Activated T-helper 1 cell treated with anti-CD3 and anti-CD28 coated beads, Interleukin-12 subunit alpha, Interleukin-12 subunit beta, Interleukin-2, Interleukin-4 antibody, amounts not matched to agents 30 ng/mL and 10 ng/mL and 1 ng/mL, durations not matched to agents 14 hours and 24 hours and 36 hours (primary cell): ENCODE measurements at regions of chr2 and their contacts with region 1.

Region 1: GRCh38 chr2:42494355-42495233 is 812 bp upstream of the KCNG3 start:
- DNase-seq: peak; percentile 57
- H3K4me3 Mint-ChIP-seq: peak overlapping the region; percentile 89
- H3K27ac Mint-ChIP-seq: peak overlapping the region; percentile 82
- H3K4me1 Mint-ChIP-seq: peaks cover 9% of the 10 kb centered on the region
- H3K27me3 Mint-ChIP-seq: peaks cover 40% of the 10 kb centered on the region

Region 2: DNA sequence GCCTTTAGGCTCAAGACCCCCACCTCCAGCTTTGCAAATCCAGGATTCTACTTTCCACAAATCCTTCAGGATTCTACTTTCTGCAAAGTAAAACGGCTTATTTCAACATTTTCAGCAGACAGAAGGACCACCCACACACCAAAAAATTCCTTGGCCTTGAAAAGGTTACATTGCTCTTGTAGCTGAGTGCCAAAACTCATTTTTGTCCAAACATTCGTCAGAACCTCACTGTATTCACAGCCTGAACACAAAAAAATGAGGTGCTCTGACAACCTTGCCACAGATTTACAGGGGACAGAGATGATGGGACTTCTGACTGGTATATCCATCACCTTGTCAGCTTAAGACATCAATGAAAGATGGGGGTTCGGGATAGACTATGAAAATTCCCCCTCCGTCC is 70.6 kb before region 1 on chr2:
- intact Hi-C with region 1: loop called (anchors 5 kb)
- DNase-seq: no peak
- H3K4me3 Mint-ChIP-seq: no peak overlapping the region
- H3K27ac Mint-ChIP-seq: no peak overlapping the region
- H3K4me1 Mint-ChIP-seq: peaks cover 9% of the 10 kb centered on the region
- H3K27me3 Mint-ChIP-seq: no peaks in the 10 kb centered on the region

Region 3: GRCh38 chr2:42568401-42569115 is 74.0 kb after region 1 on chr2 and contains the start of gene MTA3:
- intact Hi-C with region 1: loop called (anchors 2 kb)
- DNase-seq: peak; percentile 54
- H3K4me3 Mint-ChIP-seq: peak within 1 kb of the TSS; percentile 92
- H3K27ac Mint-ChIP-seq: peak within 1 kb of the TSS; percentile 96
- H3K4me1 Mint-ChIP-seq: peaks cover 20% of the 10 kb centered on the region
- H3K27me3 Mint-ChIP-seq: peaks cover 3% of the 10 kb centered on the region
- total RNA-seq, gene MTA3: 29.4 and 31.1 TPM in 2 replicates

Region 4: GRCh38 chr2:42792583-42793333 is 298.2 kb after region 1 on chr2 and contains the start of gene HAAO:
- intact Hi-C with region 1: loop called (anchors 5 kb)
- DNase-seq: no peak
- H3K4me3 Mint-ChIP-seq: peak within 1 kb of the TSS; percentile 76
- H3K27ac Mint-ChIP-seq: peak within 1 kb of the TSS; percentile 59
- H3K4me1 Mint-ChIP-seq: peaks cover 26% of the 10 kb centered on the region
- H3K27me3 Mint-ChIP-seq: peaks cover 38% of the 10 kb centered on the region
- total RNA-seq, gene HAAO: 0.37 and 0.86 TPM in 2 replicates

Region 5: DNA sequence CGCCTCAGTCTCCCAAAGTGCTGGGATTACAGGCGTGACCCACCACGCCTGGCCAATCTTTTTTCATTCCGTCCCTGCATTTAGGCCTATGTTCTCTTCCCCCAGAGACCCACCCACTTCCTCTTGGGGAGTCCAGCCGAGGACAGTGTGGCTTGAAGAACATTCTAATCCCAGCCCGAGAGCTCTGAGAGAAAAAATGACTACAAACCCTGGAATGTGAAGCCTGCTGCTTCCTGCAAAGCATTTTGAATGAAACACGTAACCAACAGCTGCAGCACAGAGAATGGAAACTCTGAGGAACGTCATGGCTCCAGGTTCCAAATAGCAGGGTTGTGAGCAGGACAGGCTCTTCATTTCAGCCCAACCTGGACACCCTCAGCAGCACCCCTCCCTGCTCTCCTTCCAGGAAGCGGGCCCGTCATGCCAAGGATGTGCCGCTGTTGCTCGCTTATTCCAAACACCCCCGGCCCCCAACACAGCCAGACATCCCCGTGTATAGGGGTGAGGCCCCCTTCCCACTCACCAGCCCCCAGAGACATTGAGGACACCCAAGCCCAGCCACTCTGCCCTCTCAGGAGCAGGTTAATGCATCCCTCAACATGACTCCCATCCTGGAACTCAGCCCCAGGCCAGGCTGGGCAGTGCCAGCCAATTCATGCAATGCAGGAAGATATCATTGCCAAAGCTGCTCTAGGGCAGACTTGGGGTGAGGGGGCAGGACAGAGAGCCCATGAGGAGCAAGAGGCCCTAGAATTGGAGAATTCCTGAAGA is 592.0 kb after region 1 on chr2:
- intact Hi-C with region 1: no loop called
- DNase-seq: no peak
- H3K4me3 Mint-ChIP-seq: no peak overlapping the region
- H3K27ac Mint-ChIP-seq: no peak overlapping the region
- H3K4me1 Mint-ChIP-seq: no peaks in the 10 kb centered on the region
- H3K27me3 Mint-ChIP-seq: peaks cover 4% of the 10 kb centered on the region